IMR-90 (cell line): ENCODE measurements at regions of chr15 and their contacts with region 1.

Region 1: DNA sequence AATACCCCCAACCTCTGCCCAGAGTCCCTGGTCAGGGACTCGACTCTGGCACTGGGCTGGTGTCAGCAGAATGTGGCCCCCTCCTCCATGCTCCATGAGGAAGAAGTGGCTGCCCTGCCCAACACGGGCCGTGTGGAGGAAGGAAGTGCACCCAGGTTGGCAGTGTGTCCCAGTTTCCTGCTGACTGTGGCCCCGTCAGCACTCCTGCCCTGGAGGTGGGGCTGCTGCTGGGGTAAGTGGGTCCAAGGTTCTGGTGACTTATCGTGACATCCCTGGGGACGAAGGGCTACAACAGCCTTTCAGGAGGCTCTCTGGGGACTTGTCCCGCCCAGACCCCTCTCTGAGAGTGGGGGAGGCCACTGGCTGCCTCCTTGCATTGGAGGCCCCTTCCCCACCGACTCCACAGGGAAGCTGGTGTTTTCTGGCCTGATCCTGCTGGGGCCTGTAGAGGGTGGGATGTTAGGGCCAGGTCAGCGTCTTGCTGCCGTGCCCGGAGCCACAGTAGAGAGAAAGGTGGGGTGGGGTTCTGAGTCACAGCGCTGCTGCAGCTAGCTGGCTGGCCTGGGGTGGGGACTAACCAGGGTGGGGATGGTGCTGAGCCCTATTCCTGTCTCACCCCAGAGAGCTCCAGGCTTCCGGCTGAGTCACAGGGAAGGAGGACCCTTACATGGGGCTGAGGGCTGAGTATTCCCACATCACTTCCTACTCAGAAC is 10.5 kb downstream of the SEMA4B start:
- DNase-seq: peak; percentile 67
- ATAC-seq: peak; percentile 86
- H3K4me3 ChIP-seq: no peak overlapping the region
- H3K27ac ChIP-seq: peak overlapping the region; percentile 20; the same call in 1 of the 2 replicates
- H3K4me1 ChIP-seq: peaks cover 6% of the 10 kb centered on the region
- H3K27me3 ChIP-seq: no peaks in the 10 kb centered on the region
- CTCF ChIP-seq: no peak
- POLR2A ChIP-seq: no peak
- RAD21 ChIP-seq: no peak

Region 2: DNA sequence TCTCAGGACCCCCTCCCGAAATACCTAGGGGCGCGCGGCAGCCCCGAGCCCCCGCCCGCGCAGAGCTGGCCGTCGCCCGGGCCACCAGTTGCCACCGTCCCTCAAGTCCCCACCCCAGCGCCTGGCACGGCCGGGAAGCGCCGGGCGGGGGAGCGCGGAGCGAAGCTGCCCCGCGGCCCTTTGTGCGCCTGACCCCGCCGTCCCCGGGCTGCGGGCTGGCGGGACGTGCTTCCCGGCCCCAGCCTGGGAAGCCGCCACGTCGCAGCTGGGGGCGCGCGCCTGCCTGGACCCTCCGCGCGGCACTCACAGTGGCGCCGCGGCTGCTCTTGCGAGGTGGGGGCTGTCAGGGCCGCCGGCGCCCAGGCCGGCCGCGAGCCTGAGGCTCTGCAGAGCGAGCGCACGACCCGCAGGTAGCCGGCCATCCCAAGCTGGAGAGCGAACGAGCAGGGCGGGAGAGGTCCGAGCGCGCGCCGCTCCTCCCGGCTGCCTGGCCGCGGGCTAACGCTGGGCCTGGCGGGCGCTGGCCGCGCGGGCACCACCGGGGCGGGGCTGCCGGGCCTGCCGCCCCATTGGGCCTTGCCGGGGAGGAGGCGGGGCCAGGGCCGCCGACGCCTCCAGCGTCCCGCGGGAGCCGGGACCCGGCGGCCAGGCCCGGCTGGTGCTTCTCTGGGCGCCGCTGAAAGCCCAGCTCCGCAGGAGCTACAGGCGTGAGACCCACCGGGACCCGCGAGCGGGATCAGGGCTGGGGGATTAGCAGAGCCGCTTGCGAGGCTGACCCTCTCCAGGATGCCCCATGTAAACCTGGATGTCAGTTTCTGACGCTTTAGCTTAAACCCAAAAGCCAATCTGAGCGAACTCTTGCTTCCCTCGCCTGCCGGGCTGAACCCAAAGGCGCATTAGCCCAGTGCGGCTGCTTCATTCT is 109.4 kb before region 1 on chr15 and contains the start of gene IDH2:
- CTCF ChIA-PET with region 1: no interaction called
- POLR2A ChIA-PET with region 1: no interaction called
- dilution Hi-C with region 1: no loop called
- in situ Hi-C with region 1: no loop called
- intact Hi-C with region 1: loop called (anchors 2 kb)
- DNase-seq: peak; percentile 79
- ATAC-seq: peak; percentile 90
- H3K4me3 ChIP-seq: peak within 1 kb of the TSS; percentile 93
- H3K27ac ChIP-seq: peak within 1 kb of the TSS; percentile 58
- H3K4me1 ChIP-seq: peaks cover 31% of the 10 kb centered on the region
- H3K27me3 ChIP-seq: no peaks in the 10 kb centered on the region
- CTCF ChIP-seq: no peak
- POLR2A ChIP-seq: peak; percentile 93
- RAD21 ChIP-seq: no peak
- total RNA-seq, gene IDH2: 87.2 and 118 TPM in 2 replicates

Region 3: GRCh38 chr15:90201130-90201949 is 10.2 kb before region 1 on chr15 and contains the start of gene SEMA4B:
- CTCF ChIA-PET with region 1: interaction called, 3 read pairs
- POLR2A ChIA-PET with region 1: interaction called, 12 read pairs
- dilution Hi-C with region 1: no loop called
- in situ Hi-C with region 1: no loop called
- intact Hi-C with region 1: no loop called
- DNase-seq: peak; percentile 32
- ATAC-seq: peak; percentile 90
- H3K4me3 ChIP-seq: peak within 1 kb of the TSS; percentile 91
- H3K27ac ChIP-seq: peak within 1 kb of the TSS; percentile 11; the same call in 1 of the 2 replicates
- H3K4me1 ChIP-seq: peaks cover 8% of the 10 kb centered on the region
- H3K27me3 ChIP-seq: no peaks in the 10 kb centered on the region
- CTCF ChIP-seq: no peak
- POLR2A ChIP-seq: 0 out of 2 replicates have a peak, but pooled peaks have one; percentile 32
- RAD21 ChIP-seq: no peak
- total RNA-seq, gene SEMA4B: 5.0 and 6.9 TPM in 2 replicates